Lower leg skin (tissue), 4 donors: ENCODE measurements at regions of chr2 and their contacts with region 1.

Region 1: DNA sequence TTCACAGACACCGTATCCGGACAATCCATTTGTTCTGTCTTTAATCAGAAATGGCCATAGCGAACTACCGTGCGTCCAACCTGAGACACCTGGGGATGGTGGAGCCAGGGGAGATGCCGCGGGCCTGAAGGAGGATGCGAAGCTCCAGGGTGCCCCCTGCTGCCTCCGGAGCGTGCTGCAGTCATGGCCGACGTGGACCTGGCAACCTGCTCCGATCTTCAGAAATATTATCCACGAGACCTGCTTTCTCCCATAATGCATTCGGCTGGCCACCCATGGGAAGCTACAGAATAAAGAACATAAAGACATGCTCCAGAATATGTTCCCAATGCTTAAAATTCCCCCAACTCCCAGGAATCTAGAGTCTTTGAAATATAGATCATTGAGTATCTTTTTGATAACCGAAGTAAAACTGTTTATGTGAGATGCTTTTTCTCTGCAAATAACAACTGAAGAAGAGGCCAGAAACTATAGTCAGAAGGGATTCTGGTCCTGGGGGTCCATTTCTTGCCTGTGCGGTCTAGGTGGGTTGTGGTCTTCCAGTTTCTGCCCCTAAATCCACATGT is 30.7 kb upstream of the SLC66A3 start:
- DNase-seq: no peak
- H3K4me3 ChIP-seq: no peak overlapping the region
- CTCF ChIP-seq: no peak
- POLR2A ChIP-seq: no peak

Region 2: DNA sequence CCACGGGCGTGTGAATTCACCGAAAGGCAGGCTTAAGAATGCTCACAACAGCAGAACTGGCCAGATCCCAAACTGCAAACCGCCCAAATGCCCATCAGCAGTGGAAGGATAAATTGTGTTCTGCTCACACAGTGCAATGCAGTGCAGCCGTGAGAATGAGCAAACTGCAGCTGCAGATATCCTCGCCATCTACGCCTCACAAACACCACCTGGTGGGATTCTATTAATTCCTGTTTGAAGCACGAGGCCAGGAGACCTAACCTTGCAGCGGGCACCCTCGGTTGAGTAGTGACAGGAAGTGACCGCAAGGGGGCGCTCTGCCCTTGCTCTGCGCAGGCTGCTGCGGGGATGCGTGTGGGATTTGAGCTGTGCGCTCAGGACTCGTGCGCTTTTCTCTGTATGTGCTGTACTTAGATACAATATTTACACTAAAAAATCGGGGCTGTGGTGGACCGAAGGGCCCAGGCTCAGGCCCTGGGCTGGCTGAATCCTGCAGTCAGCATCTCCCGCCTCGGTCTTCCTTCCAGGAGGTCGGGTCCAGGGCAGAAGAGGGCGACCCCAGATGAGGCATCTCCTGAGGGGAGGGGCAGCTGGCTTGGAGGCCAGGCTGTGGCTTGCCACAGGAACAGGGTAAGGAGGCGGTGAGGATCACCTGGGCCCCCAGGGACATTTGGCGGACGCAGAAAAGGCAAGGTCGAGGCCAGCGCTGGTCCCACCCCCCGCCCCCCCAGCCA is 292.2 kb before region 1 on chr2:
- intact Hi-C with region 1: loop called (anchors 5 kb)
- DNase-seq: peak; percentile 54 to 95
- H3K4me3 ChIP-seq: no peak overlapping the region
- CTCF ChIP-seq: peak in 1 of 3 donors; percentile 94
- POLR2A ChIP-seq: no peak

Region 3: GRCh38 chr2:11175293-11175795 is 50.8 kb after region 1 on chr2:
- intact Hi-C with region 1: no loop called
- DNase-seq: peak in 1 of 2 donors; percentile 82
- H3K4me3 ChIP-seq: no peak overlapping the region
- CTCF ChIP-seq: no peak
- POLR2A ChIP-seq: no peak

Region 4: GRCh38 chr2:11213090-11213638 is 88.6 kb after region 1 on chr2:
- intact Hi-C with region 1: no loop called
- DNase-seq: no peak
- H3K4me3 ChIP-seq: no peak overlapping the region
- CTCF ChIP-seq: no peak
- POLR2A ChIP-seq: no peak